ENCODE measurements at regions of chr1 and their contacts with region 1.

Region 1: GRCh38 chr1:117367047-117368018 is at the start of gene MAN1A2:
- DNase-seq: peak; percentile 77
- H3K4me3 Mint-ChIP-seq: peak within 1 kb of the TSS; percentile 90
- H3K27ac Mint-ChIP-seq: peak within 1 kb of the TSS; percentile 93
- H3K4me1 Mint-ChIP-seq: peaks cover 57% of the 10 kb centered on the region
- H3K27me3 Mint-ChIP-seq: no peaks in the 10 kb centered on the region
- total RNA-seq, gene MAN1A2: 26.0 and 27.1 TPM in 2 replicates

Region 2: GRCh38 chr1:117121776-117122697 is 245.3 kb before region 1 on chr1:
- intact Hi-C with region 1: loop called (anchors 10 kb)
- DNase-seq: peak; percentile 75
- H3K4me3 Mint-ChIP-seq: peak overlapping the region; percentile 81
- H3K27ac Mint-ChIP-seq: peak overlapping the region; percentile 19
- H3K4me1 Mint-ChIP-seq: peaks cover 5% of the 10 kb centered on the region
- H3K27me3 Mint-ChIP-seq: peaks cover 17% of the 10 kb centered on the region

Region 3: GRCh38 chr1:117664314-117664713 is 297.0 kb after region 1 on chr1:
- intact Hi-C with region 1: loop called (anchors 5 kb)
- DNase-seq: peak; percentile 67
- H3K4me3 Mint-ChIP-seq: no peak overlapping the region
- H3K27ac Mint-ChIP-seq: peak overlapping the region; percentile 83
- H3K4me1 Mint-ChIP-seq: peaks cover 67% of the 10 kb centered on the region
- H3K27me3 Mint-ChIP-seq: no peaks in the 10 kb centered on the region

Region 4: DNA sequence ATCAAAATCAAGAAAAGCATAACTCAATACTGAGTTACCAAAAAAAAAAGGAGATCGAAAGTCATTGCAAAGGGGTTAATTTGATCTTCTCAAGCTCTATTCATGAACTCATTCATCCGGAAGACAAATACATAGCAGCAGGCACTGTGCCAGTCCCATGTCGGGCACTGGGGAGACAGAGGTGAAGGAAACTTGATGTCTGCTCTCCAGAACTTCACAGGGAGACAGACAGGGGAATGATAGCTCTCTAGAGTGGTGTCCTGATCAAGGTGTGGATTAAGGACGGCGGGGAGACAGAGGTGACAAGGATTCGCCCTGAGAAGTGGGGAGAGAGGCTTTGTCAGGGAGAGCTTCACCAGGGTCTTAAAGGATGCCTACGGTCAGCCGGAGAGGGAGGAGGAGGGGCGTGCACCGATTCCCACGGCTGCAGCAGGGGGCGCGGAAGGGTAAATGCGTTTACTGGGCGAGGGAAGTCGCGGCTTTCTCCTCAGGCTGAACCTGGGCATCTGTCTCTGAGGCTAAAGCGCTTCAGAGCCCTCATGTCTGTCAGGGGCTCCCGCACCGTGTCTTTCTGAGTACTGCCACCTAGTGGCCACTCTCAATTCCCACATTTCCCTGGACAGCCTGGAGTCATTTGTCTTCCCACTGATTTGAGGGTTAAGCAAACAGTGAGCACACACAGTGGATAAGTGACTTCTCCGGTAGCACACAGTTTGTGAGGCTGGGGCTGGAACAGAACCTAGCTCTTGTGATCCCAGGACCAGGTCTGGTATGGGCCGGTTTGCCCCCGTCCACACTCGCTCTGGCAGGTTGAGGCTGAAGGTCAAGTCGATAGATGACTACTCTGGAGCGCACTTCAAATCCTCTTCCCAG is 391.3 kb after region 1 on chr1:
- intact Hi-C with region 1: loop called (anchors 10 kb)
- DNase-seq: peak; percentile 60
- H3K4me3 Mint-ChIP-seq: peak overlapping the region; percentile 75
- H3K27ac Mint-ChIP-seq: no peak overlapping the region
- H3K4me1 Mint-ChIP-seq: peaks cover 10% of the 10 kb centered on the region
- H3K27me3 Mint-ChIP-seq: peaks cover 37% of the 10 kb centered on the region

Region 5: GRCh38 chr1:117929173-117929989 is 562.0 kb after region 1 on chr1 and contains the starts of genes GDAP2 and WDR3:
- intact Hi-C with region 1: loop called (anchors 1 kb)
- DNase-seq: peak; percentile 95
- H3K4me3 Mint-ChIP-seq: peak within 1 kb of the TSS; percentile 93
- H3K27ac Mint-ChIP-seq: peak within 1 kb of the TSS; percentile 80
- H3K4me1 Mint-ChIP-seq: peaks cover 39% of the 10 kb centered on the region
- H3K27me3 Mint-ChIP-seq: peaks cover 1% of the 10 kb centered on the region
- total RNA-seq, gene GDAP2: 19.7 and 25.3 TPM in 2 replicates
- total RNA-seq, gene WDR3: 54.2 and 55.5 TPM in 2 replicates